Heart left ventricle (tissue), 16 donors: ENCODE measurements at regions of chr2 and their contacts with region 1.

Region 1: DNA sequence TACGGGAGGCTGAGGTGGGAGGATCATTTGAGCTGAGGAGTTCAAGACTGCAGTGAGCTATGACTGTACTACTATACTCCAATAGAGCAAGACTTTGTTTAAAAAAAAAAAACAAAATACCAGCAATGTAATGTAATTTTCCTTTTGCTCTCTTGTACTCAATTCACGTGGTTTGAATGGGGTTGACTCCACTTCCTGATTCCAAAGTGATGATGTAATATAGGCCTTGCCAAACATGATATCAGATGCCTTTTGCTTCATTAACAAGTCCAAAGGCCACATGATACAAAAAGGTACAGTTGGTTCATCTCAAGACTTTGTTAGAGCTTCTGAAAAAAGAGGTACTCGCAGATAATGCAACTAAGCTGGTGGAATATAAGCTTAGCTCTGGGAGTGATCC is 321.8 kb downstream of the ZEB2 start:
- DNase-seq: no peak
- ATAC-seq: peak in 3 of 4 donors; percentile 18 to 26 (median 24)
- H3K4me3 ChIP-seq: no peak overlapping the region
- H3K27ac ChIP-seq: no peak overlapping the region
- H3K4me1 ChIP-seq: peaks cover 0 to 8% (median 0%) of the 10 kb centered on the region in 12 donors
- H3K27me3 ChIP-seq: no peaks in the 10 kb centered on the region
- CTCF ChIP-seq: no peak
- POLR2A ChIP-seq: no peak

Region 2: DNA sequence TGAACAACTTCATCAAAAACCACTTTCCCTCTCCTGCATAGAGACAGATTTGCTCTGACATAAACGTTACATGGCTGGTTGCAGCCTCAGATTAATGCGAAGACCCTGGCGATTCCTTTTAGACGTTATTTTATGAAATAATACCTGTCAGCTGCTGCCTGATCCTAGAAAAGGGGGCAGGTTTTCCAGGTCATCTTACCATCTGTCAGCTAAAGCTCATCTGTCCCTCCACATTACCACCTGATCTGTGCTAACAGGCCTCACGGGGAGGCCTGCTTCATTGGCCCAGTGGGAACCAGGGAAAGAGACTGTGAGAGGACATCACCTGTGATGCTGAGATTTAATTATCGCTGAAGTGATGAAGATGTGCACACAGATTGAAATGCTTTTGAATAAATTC is 807.9 kb before region 1 on chr2:
- intact Hi-C with region 1: no loop called
- DNase-seq: no peak
- ATAC-seq: no peak
- H3K4me3 ChIP-seq: no peak overlapping the region
- H3K27ac ChIP-seq: no peak overlapping the region
- H3K4me1 ChIP-seq: no peaks in the 10 kb centered on the region
- H3K27me3 ChIP-seq: no peaks in the 10 kb centered on the region
- CTCF ChIP-seq: no peak
- POLR2A ChIP-seq: no peak

Region 3: DNA sequence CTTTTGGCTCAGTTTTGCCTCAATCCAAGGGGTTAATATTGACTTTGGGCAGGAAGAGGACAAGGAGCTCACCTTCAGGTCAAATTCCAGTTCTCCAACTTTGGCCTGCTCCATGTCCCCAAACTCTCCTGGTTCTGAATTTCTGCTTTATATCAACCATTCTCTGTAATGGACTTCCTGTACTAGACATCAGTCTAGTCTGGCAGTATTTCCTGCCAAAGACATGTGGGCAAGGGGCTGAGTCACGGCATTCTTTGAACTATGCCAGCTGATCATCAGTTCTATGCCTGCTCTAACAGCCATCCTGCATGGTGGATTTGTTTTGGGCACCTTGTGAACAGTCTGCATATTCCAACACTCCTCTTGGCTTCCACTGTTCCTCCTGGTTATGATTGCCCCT is 122.4 kb after region 1 on chr2:
- intact Hi-C with region 1: loop called in 1 of 10 experiments (anchors 10 kb)
- DNase-seq: peak in 1 of 5 donors; percentile 33
- ATAC-seq: peak in 3 of 4 donors; percentile 26 to 73 (median 60)
- H3K4me3 ChIP-seq: no peak overlapping the region
- H3K27ac ChIP-seq: peak overlapping the region in 1 of 12 donors; percentile 8
- H3K4me1 ChIP-seq: peaks cover 0 to 32% (median 4%) of the 10 kb centered on the region in 12 donors
- H3K27me3 ChIP-seq: no peaks in the 10 kb centered on the region
- CTCF ChIP-seq: no peak
- POLR2A ChIP-seq: no peak